ENCODE measurements at regions of chr9 and their contacts with region 1.

Region 1: GRCh38 chr9:20941174-20941690 is 90.2 kb downstream of the HACD4 start:
- DNase-seq: peak; percentile 62
- ATAC-seq: peak; percentile 100
- H3K4me3 ChIP-seq: no peak overlapping the region
- H3K27ac ChIP-seq: no peak overlapping the region
- H3K4me1 ChIP-seq: no peaks in the 10 kb centered on the region
- H3K27me3 ChIP-seq: no peaks in the 10 kb centered on the region
- CTCF ChIP-seq: peak; percentile 72 to 89 (median 80)
- POLR2A ChIP-seq: no peak
- RAD21 ChIP-seq: peak; percentile 92

Region 2: DNA sequence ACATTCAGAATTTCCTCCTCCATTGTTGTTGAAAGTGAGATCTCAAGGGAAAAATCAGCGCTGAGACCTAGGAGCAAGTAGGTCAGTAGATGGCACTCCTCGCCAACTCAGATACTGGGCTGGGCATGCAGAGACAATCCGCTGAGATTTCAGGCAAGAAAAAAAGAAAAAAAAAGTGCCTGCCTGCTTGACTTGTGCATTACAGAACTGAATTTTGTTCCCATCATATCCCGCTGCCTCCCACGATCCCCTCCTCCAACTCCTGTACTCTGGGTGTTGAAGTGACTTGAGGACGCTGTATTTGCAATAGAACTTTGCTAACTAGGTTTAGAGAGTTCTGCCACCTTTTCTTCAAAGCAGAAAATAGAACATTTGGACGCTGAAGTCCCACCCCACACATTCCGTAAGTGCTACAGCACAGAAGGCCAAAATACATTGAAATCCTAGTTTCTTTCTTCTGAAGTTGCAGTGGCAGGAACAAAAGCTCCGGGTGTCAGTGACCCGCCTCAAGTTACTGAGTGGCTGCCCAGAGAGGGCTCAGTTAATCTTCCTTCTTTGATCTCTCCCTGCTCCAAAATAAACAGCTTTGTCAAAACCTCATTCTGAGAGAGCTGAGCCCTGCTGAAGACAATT is 584.7 kb before region 1 on chr9:
- CTCF ChIA-PET with region 1: interaction called, 6 read pairs
- POLR2A ChIA-PET with region 1: no interaction called
- RAD21 ChIA-PET with region 1: interaction called in 1 of 2 experiments, 3 read pairs
- intact Hi-C with region 1: loop called (anchors 1 kb)
- DNase-seq: peak; percentile 43
- ATAC-seq: peak; percentile 91
- H3K4me3 ChIP-seq: no peak overlapping the region
- H3K27ac ChIP-seq: no peak overlapping the region
- H3K4me1 ChIP-seq: no peaks in the 10 kb centered on the region
- H3K27me3 ChIP-seq: peaks cover 5% of the 10 kb centered on the region; the same call in 1 of the 2 replicates
- CTCF ChIP-seq: peak; percentile 49 to 66 (median 62); a peak in 5 of 6 replicates
- POLR2A ChIP-seq: no peak
- RAD21 ChIP-seq: peak; percentile 85

Region 3: DNA sequence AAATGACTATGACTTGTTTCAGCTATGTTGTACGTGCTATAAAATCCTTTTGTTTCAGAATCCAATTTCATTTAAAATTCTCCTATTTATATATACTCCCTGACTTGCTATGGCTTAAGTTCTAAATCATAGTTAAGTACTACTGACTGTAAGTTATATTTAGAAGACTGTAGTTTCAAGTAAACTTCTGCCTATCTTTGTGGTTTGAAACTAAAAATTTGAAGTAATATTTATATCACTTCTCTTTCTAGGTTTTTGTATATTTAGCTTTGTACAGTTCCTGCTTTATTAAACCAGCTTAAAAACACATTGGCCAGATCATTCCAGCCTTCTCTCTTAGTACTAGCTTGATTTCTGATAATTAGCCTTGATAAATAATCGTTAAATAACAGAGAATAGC is 515.2 kb before region 1 on chr9:
- CTCF ChIA-PET with region 1: no interaction called
- POLR2A ChIA-PET with region 1: no interaction called
- RAD21 ChIA-PET with region 1: interaction called in 1 of 2 experiments, 3 read pairs
- intact Hi-C with region 1: loop called (anchors 5 kb)
- DNase-seq: no peak
- ATAC-seq: no peak
- H3K4me3 ChIP-seq: no peak overlapping the region
- H3K27ac ChIP-seq: no peak overlapping the region
- H3K4me1 ChIP-seq: no peaks in the 10 kb centered on the region
- H3K27me3 ChIP-seq: no peaks in the 10 kb centered on the region; the same call in 1 of the 2 replicates
- CTCF ChIP-seq: no peak
- POLR2A ChIP-seq: no peak
- RAD21 ChIP-seq: no peak

Region 4: DNA sequence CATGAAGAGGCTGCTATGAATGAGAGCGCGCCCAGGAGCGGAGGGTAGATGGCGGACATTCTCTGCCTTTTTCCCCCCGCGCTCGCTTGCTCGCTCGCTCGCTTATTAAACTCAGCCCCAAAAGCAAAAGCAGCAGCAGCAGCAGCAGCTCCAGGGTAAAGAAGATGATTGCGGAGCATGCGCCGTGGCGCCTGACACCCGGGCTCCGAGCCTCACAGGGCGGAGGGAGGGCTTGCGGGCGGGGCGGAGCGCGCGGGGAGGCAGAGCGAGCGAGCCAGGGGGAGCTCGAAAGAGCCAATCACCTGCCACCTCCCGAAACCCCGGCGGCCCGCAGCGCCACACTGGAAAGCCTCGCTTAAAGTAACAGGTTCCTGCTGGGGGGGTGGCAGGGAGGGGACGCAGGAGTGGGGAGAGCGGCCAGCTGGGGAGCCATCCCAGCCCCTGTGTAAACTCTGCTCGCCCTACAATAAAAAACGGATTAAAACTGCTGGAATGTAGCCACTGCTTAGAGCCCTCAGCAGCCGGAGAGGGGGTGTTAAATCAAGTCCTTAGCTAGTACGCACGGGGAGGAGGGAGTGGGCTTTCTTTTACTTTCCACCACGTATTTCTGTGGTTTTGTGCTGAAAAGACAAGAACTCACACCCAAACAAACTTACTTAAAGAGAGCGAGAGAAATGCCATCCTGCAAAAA is 318.8 kb before region 1 on chr9 and contains the start of gene MLLT3:
- CTCF ChIA-PET with region 1: interaction called, 43 read pairs
- POLR2A ChIA-PET with region 1: no interaction called
- RAD21 ChIA-PET with region 1: interaction called, 6 to 10 read pairs
- intact Hi-C with region 1: loop called (anchors 1 kb)
- DNase-seq: peak; percentile 84
- ATAC-seq: peak; percentile 88
- H3K4me3 ChIP-seq: peak within 1 kb of the TSS; percentile 52 to 75
- H3K27ac ChIP-seq: peak within 1 kb of the TSS; percentile 66
- H3K4me1 ChIP-seq: peaks cover 0 to 23% of the 10 kb centered on the region in 2 experiments; a peak in 2 of 4 replicates
- H3K27me3 ChIP-seq: peaks cover 10% of the 10 kb centered on the region; the same call in 1 of the 2 replicates
- CTCF ChIP-seq: no peak
- POLR2A ChIP-seq: peak; percentile 24
- RAD21 ChIP-seq: no peak
- total RNA-seq, gene MLLT3: 4.3 TPM

Region 5: DNA sequence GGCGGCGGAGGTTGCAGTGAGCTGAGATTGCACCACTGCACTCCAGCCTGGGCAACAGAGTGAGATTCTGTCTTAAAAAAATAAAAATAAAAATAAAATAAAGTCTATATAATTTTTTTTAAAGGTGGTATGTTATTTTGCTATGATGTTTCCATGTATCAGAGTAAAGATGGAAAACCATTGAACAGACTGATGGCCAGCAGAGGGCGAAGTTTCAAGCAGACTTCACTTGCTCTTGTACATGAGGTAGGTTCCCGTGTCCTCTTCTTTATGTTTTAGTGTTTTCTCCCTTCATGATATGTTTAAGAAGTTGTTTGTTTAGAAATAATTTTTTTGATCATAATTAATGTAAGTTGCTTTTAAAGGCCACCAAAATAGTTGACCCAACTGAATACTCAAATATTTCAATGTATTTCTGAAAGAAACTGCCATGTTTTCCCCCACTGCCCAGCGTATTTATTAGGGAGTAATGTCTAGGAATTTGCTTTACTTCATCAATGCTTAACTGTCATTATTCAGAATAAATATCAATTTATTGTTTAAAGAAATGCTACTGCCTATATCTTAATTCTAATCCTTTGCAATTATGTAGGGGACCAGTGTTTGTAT is 56.1 kb before region 1 on chr9:
- CTCF ChIA-PET with region 1: interaction called, 15 read pairs
- POLR2A ChIA-PET with region 1: no interaction called
- RAD21 ChIA-PET with region 1: no interaction called
- intact Hi-C with region 1: no loop called
- DNase-seq: peak; percentile 12
- ATAC-seq: peak; percentile 63; the same call in 1 of the 2 replicates
- H3K4me3 ChIP-seq: no peak overlapping the region
- H3K27ac ChIP-seq: no peak overlapping the region
- H3K4me1 ChIP-seq: no peaks in the 10 kb centered on the region
- H3K27me3 ChIP-seq: no peaks in the 10 kb centered on the region
- CTCF ChIP-seq: peak in 2 of 3 experiments; percentile 60 to 65; a peak in 4 of 6 replicates
- POLR2A ChIP-seq: no peak
- RAD21 ChIP-seq: peak; percentile 38

Measured in HCT116 (cell line).